ENCODE measurements at regions of chr3 and their contacts with region 1.

Region 1: DNA sequence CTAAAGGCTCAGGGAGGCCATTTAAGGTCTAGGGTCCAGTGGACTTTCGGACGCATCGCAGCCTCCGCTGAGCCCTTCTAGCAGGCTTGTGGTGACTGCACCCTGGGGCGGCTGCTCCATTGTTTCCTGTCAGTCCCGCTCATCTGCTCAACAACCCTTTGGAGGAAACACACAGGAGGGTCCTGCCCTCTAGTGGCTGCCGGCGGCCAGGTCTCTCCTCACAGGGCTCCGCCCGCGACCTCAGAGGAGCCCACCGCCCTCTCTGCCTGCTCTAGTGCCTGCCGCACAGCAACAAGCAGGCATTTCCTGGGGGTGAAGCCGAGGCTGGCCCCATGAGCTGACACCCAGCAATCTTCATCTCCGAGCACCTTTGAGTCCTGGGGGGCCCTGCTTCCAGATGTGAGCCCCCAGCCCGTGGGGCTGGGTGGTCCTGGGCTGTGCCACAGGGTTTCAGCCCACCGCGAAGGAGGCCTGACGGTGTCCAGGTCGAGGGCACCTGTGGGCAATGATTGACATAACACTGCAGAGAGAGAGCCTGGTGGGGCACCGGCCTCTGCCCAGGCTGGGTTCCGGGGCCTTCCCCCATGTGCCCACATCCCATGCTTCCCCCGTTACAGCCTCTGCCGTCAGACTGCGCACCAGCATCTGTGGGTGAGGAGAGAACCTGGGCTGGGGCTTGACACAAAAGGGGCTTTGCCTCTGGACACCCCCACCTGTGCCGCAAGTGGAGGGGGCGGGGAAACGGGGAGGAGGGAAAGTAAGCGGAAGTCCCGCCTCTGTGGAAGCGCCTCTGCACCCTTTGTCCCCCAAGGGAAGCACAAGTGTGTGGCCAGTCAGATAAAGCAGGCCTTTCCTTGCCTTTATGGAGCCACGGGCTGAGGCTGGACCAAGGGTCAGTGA is 27.0 kb upstream of the SFMBT1 start:
- DNase-seq: peak; percentile 72
- H3K4me3 ChIP-seq: peak overlapping the region; percentile 57 to 66
- H3K27ac ChIP-seq: peak overlapping the region; percentile 55 to 56
- H3K4me1 ChIP-seq: peaks cover 5% of the 10 kb centered on the region
- H3K27me3 ChIP-seq: no peaks in the 10 kb centered on the region
- CTCF ChIP-seq: peak; percentile 80 to 95 (median 85)
- POLR2A ChIP-seq: no peak

Region 2: DNA sequence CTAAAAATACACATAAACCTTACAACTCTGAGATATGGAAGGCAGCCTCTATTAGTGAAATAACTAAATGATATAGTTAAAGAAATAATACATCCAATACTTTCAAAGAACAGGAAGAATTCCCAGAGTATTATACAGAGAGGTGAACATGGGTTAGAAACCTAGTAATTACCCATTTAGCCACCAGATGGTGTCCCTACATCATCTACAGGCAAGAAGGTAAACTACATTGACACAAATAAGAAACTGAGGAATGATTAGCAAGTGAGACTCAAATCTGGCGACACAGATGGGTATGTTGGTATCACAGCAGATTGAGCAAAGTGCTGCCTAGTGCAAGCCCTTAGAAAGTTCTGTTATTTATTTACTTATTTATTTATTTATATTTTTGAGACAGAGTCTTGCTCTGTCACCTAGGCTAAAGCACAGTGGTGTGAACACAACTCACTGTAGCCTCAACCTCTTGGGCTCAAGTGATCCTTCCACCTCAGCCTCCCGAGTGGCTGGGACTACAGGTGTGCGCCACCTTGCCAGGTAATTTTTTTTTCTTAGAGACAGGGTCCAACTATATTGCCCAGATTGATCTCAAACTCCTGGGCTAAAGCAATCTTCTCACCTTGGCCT is 330.4 kb before region 1 on chr3:
- intact Hi-C with region 1: loop called (anchors 2 kb)
- DNase-seq: no peak
- H3K4me3 ChIP-seq: no peak overlapping the region
- H3K27ac ChIP-seq: no peak overlapping the region
- H3K4me1 ChIP-seq: no peaks in the 10 kb centered on the region
- H3K27me3 ChIP-seq: no peaks in the 10 kb centered on the region
- CTCF ChIP-seq: peak in 3 of 4 experiments; percentile 38 to 60 (median 52)
- POLR2A ChIP-seq: no peak

Region 3: GRCh38 chr3:52770496-52771333 is 302.2 kb before region 1 on chr3 and contains the start of gene NEK4:
- intact Hi-C with region 1: loop called (anchors 10 kb)
- DNase-seq: peak; percentile 90
- H3K4me3 ChIP-seq: peak within 1 kb of the TSS; percentile 79 to 96
- H3K27ac ChIP-seq: peak within 1 kb of the TSS; percentile 71 to 73
- H3K4me1 ChIP-seq: no peaks in the 10 kb centered on the region
- H3K27me3 ChIP-seq: no peaks in the 10 kb centered on the region
- CTCF ChIP-seq: peak in 1 of 4 experiments; percentile 26
- POLR2A ChIP-seq: peak; percentile 52
- total RNA-seq, gene NEK4: 24.5 to 49.9 TPM

Region 4: DNA sequence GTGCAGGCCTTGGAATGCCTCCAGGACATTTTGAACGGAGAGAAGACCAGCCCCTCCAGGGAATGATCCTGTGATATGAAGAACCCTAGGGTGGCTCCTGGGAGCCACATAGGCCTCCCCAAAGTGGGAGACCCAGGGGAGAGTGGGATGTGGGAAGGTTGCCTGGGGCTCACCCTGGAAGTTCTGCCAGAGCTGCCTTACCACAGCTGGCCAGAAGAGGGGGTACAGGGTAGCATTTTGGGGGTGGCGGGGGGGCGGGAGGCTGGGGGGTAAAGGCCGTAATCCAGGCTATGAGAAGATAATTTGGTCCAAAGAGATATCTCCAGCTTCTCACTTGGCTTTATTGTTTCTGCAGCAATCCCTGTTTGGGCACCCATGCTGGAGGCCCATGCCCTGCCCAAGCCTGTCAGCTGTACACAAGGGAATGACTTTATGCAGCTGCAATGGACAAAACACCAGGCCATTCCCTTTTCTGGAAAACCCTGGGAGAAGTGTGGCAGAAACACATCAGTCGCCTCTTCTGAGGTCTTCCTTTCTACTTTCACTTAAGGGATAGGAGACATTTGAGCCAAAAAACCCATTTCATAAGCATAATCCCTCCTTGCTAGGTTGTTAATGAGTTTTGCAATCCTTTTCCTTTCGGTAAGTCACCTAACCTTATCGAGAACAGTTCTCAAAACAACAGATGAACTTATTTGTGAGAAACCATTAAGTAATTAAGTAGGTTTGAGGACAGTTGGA is 227.0 kb before region 1 on chr3:
- intact Hi-C with region 1: loop called (anchors 10 kb)
- DNase-seq: no peak
- H3K4me3 ChIP-seq: no peak overlapping the region
- H3K27ac ChIP-seq: peak overlapping the region; percentile 57 to 66
- H3K4me1 ChIP-seq: no peaks in the 10 kb centered on the region
- H3K27me3 ChIP-seq: no peaks in the 10 kb centered on the region
- CTCF ChIP-seq: no peak
- POLR2A ChIP-seq: no peak

Region 5: DNA sequence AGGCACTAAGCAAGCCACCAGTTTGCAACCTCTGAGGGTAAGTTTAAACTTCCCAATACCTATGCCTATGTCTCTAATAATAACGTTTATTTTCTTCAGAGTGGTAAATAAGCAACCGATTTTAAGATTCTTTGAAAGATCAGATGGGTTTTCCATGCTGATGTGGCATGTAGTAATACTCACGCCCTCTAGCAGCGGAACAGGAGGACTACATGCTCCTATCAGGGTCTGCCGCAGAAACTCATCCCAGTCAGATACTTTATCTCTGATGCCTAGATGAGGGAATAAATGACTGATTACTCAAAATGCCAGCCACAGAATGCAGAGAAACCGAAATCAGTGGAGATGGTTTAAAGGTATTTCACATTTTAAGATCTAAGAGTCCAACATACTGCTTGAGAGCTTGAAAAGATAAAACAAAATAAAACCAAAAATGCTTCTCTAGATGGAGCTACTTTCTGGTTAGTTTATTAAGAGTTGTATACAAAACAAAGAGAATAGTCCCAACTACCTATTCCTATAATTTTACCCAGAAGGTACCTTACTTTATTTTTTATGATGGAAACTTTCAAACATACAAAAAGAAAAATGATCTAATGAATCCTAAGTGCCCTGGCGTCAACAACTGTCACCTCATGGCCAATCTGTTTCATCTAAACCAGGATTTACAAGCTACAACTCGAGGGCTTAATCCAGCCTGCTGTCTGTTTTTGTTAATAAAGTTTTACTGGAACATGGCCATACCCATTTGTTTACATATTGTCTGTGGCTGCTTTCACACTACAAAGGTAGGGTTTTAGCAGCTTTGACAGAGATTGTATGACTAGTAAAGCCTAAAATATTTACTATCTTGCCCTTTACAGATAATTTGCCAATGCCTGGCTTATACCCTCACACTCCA is 138.0 kb before region 1 on chr3:
- intact Hi-C with region 1: loop called (anchors 5 kb)
- DNase-seq: peak; percentile 39
- H3K4me3 ChIP-seq: no peak overlapping the region
- H3K27ac ChIP-seq: no peak overlapping the region
- H3K4me1 ChIP-seq: no peaks in the 10 kb centered on the region
- H3K27me3 ChIP-seq: no peaks in the 10 kb centered on the region
- CTCF ChIP-seq: peak; percentile 29 to 68 (median 44)
- POLR2A ChIP-seq: no peak

Region 6: GRCh38 chr3:53219895-53220483 is 147.1 kb after region 1 on chr3:
- intact Hi-C with region 1: no loop called
- DNase-seq: peak; percentile 72
- H3K4me3 ChIP-seq: no peak overlapping the region
- H3K27ac ChIP-seq: no peak overlapping the region
- H3K4me1 ChIP-seq: no peaks in the 10 kb centered on the region
- H3K27me3 ChIP-seq: no peaks in the 10 kb centered on the region
- CTCF ChIP-seq: peak; percentile 42 to 88 (median 75)
- POLR2A ChIP-seq: no peak

Measured in prostate gland (tissue), 2 donors.